H1 (cell line): ENCODE measurements at regions of chr7 and their contacts with region 1.

Region 1: DNA sequence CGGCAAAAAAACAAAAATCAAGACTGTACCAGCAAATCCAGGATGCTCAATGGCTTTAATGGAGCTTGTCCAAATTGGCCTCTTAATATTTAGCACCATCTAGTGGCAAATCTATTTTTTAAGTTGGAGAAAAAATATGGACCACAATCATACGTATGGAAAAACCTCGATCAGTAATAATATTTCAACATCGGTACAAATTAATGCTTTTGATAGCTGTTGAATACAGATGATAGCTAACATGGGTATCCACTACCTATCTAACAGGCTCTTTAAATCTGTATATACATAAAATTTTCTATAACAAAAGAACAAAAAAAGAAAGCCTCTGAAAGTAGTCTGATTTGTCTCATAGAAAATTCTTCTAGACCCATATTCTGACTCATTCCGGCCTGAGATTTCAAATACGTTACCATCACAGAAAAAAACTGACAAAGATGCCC is 29.2 kb downstream of the COA1 start:
- DNase-seq: no peak
- H3K4me3 ChIP-seq: no peak overlapping the region
- H3K27ac ChIP-seq: no peak overlapping the region
- H3K4me1 ChIP-seq: peaks cover 0 to 5% (median 0%) of the 10 kb centered on the region in 4 experiments; a peak in 2 of 7 replicates
- H3K27me3 ChIP-seq: no peaks in the 10 kb centered on the region
- CTCF ChIP-seq: peak in 2 of 3 experiments; percentile 25 to 27; a peak in 2 of 4 replicates
- EP300 ChIP-seq: no peak
- POLR2A ChIP-seq: no peak
- RAD21 ChIP-seq: peak; percentile 67 to 73

Region 2: GRCh38 chr7:43454936-43455518 is 245.1 kb before region 1 on chr7:
- CTCF ChIA-PET with region 1: interaction called, 11 read pairs
- POLR2A ChIA-PET with region 1: no interaction called
- DNase-seq: no peak
- H3K4me3 ChIP-seq: no peak overlapping the region
- H3K27ac ChIP-seq: no peak overlapping the region
- H3K4me1 ChIP-seq: peaks cover 0 to 3% (median 2%) of the 10 kb centered on the region in 4 experiments; a peak in 4 of 7 replicates
- H3K27me3 ChIP-seq: no peaks in the 10 kb centered on the region
- CTCF ChIP-seq: peak in 2 of 3 experiments; percentile 37 to 46; a peak in 2 of 4 replicates
- EP300 ChIP-seq: no peak
- POLR2A ChIP-seq: no peak
- RAD21 ChIP-seq: peak; percentile 68 to 71

Region 3: GRCh38 chr7:43711503-43711902 is 11.4 kb after region 1 on chr7:
- CTCF ChIA-PET with region 1: interaction called, 14 read pairs
- POLR2A ChIA-PET with region 1: interaction called, 3 read pairs
- DNase-seq: no peak
- H3K4me3 ChIP-seq: no peak overlapping the region
- H3K27ac ChIP-seq: no peak overlapping the region
- H3K4me1 ChIP-seq: peaks cover 0 to 3% (median 0%) of the 10 kb centered on the region in 4 experiments; a peak in 1 of 7 replicates
- H3K27me3 ChIP-seq: no peaks in the 10 kb centered on the region
- CTCF ChIP-seq: no peak
- EP300 ChIP-seq: no peak
- POLR2A ChIP-seq: no peak
- RAD21 ChIP-seq: no peak

Region 4: DNA sequence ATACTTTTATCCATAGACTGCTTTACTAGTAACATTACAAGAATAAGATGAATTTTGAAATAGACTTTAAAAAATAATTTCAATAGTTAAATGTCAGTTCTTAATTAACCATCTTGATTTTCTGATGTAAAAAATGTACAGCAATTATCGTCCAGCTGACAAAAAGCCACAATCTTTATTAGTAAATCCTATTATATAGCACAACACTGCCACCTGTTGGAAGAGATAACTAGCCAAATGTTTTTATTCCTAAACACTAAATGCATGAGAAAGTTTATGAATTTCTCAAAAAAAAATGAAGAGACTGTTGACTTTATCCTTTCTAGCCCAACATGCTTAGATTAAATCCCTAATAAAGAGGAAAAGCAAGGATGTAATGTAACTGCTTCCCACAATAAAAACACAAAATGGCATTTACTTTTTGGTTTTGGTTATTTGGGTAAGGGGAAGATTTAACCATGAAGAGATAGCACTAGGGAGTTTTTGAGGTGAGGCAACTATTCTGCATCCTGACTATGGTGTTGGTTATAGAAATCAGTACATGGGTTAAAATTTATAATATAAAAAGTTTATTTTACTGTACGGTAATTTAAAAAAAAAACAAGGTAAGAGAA is 21.2 kb after region 1 on chr7:
- CTCF ChIA-PET with region 1: interaction called, 16 read pairs
- POLR2A ChIA-PET with region 1: interaction called, 4 read pairs
- DNase-seq: no peak
- H3K4me3 ChIP-seq: no peak overlapping the region
- H3K27ac ChIP-seq: no peak overlapping the region
- H3K4me1 ChIP-seq: 0 out of 7 replicates have a peak, but pooled peaks cover 0 to 2% (median 0%) of the 10 kb centered on the region in 4 experiments
- H3K27me3 ChIP-seq: no peaks in the 10 kb centered on the region
- CTCF ChIP-seq: peak in 2 of 3 experiments; percentile 34 to 46; a peak in 2 of 4 replicates
- EP300 ChIP-seq: no peak
- POLR2A ChIP-seq: no peak
- RAD21 ChIP-seq: peak; percentile 49 to 57

Region 5: DNA sequence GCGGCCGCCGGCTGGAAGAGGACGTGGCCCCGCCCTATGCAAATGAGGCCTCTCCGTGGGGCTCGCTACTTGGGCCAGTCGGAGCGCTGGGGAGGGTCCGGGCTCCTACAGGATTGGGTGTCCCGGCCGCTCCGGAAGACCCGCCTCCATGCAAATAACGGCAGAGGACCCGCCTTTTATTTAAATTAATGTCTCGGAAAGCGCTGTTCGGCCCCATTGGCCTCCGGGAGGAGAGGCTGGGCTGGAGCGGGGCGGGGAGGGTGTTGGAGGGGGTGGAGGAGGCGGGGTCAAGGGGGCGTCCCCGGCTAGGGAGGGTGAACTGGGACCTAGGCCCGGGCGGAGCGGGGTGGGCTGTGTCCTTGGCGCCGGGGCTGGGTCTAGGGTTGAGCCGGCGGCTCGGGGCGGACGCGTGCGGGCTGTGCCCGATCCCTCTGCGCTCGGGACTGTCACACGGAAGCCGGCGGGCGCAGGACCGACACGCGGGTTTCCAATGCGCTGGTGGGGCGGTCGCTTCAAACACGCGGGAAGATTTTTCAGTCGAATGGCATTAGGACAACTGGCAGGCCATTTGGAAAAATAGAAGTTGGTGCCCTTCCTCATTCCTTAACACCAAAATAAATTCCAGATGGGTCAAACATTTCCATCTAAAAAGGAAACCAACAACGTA is 382.6 kb after region 1 on chr7:
- CTCF ChIA-PET with region 1: no interaction called
- POLR2A ChIA-PET with region 1: no interaction called
- DNase-seq: peak; percentile 94 to 95
- H3K4me3 ChIP-seq: peak overlapping the region; percentile 42 to 70 (median 50)
- H3K27ac ChIP-seq: no peak overlapping the region
- H3K4me1 ChIP-seq: no peaks in the 10 kb centered on the region; a peak in 1 of 7 replicates
- H3K27me3 ChIP-seq: no peaks in the 10 kb centered on the region; a peak in 2 of 7 replicates
- CTCF ChIP-seq: no peak
- EP300 ChIP-seq: no peak
- POLR2A ChIP-seq: peak in 1 of 2 experiments; percentile 52; a peak in 1 of 3 replicates
- RAD21 ChIP-seq: no peak